PC-9 (cell line): ENCODE measurements at regions of chr14 and their contacts with region 1.

Region 1: DNA sequence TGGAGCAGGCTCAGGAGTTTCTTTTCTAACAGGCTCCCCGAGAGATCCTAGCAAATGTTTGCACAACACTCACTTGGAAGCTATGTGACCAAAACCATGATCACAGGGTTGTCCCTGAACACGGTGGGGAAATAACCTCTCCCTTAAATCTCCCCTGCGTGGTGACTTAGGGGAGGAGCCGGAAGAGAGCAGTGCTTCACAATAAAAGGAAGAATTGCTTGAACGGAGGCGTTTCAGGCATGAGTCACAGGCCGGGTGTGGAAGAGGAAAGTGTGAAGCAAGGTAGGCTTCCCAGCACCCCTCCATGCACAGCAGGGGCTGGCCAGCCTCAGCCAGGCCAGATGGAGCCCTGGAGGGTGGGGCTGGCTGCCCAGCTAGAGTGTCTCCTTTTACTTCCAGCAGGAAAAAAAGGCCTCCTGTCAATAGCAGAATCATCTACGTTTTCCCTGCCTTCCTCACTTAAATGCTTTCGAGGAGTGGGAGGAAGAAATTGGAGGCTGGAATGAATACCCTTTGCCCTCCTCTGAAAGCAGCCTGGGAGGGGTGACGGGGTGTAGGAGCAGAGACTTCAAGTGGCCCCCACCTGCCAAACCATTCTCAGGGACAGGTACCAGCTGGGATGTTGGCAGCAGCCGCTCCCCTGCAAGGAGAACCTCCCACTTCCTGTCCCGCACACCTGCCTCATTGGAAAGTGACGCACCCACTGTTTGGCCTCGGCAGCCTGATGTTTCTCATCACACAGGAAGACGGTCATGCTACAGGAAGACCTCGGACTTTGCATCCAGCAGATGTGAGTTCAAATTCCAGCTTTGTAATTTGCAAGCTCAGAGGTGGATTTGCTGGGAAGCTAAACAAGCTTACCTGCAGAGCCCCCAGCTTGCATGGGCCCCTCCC is 30.1 kb upstream of the PPP2R5C start:
- DNase-seq: peak; percentile 98 to 100
- H3K4me3 ChIP-seq: peak overlapping the region; percentile 54
- H3K27ac ChIP-seq: peak overlapping the region; percentile 92
- H3K4me1 ChIP-seq: peaks cover 50% of the 10 kb centered on the region
- H3K27me3 ChIP-seq: no peaks in the 10 kb centered on the region
- CTCF ChIP-seq: no peak

Region 2: DNA sequence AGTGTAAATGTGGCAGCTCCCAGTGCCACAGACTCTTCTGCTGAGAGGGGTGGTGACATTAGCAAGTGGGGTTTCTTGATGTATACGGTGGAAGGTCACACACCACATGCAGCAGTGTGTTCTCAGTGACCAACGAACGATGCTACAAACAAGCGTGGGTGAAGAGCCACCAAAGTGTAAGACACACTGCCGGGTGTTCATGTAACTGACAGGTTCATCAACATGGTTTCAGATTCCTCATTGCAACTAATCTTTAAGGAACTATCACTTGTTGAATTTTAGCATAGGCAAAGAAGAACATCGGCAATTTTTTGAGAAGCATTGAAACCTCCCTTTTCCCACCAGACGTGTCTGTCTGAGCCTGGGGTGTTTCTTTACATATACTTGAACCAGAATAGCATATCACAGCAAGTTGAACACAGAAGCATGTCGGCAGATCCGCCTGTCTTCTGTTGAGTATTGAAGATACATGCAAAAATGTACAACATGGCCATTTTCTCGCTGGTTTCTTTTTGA is 88.9 kb after region 1 on chr14:
- CTCF ChIA-PET with region 1: no interaction called
- POLR2A ChIA-PET with region 1: no interaction called
- intact Hi-C with region 1: no loop called
- DNase-seq: no peak
- H3K4me3 ChIP-seq: no peak overlapping the region
- H3K27ac ChIP-seq: no peak overlapping the region
- H3K4me1 ChIP-seq: no peaks in the 10 kb centered on the region
- H3K27me3 ChIP-seq: no peaks in the 10 kb centered on the region
- CTCF ChIP-seq: no peak

Region 3: GRCh38 chr14:101853455-101854018 is 122.1 kb after region 1 on chr14:
- CTCF ChIA-PET with region 1: no interaction called
- POLR2A ChIA-PET with region 1: interaction called, 17 read pairs
- intact Hi-C with region 1: no loop called
- DNase-seq: no peak
- H3K4me3 ChIP-seq: no peak overlapping the region
- H3K27ac ChIP-seq: no peak overlapping the region
- H3K4me1 ChIP-seq: no peaks in the 10 kb centered on the region
- H3K27me3 ChIP-seq: no peaks in the 10 kb centered on the region
- CTCF ChIP-seq: no peak

Region 4: GRCh38 chr14:101927859-101928258 is 196.4 kb after region 1 on chr14:
- CTCF ChIA-PET with region 1: no interaction called
- POLR2A ChIA-PET with region 1: no interaction called
- intact Hi-C with region 1: no loop called
- DNase-seq: no peak
- H3K4me3 ChIP-seq: no peak overlapping the region
- H3K27ac ChIP-seq: no peak overlapping the region
- H3K4me1 ChIP-seq: no peaks in the 10 kb centered on the region
- H3K27me3 ChIP-seq: no peaks in the 10 kb centered on the region
- CTCF ChIP-seq: no peak

Region 5: GRCh38 chr14:101992708-101993107 is 261.3 kb after region 1 on chr14:
- CTCF ChIA-PET with region 1: no interaction called
- POLR2A ChIA-PET with region 1: no interaction called
- intact Hi-C with region 1: no loop called
- DNase-seq: no peak
- H3K4me3 ChIP-seq: no peak overlapping the region
- H3K27ac ChIP-seq: no peak overlapping the region
- H3K4me1 ChIP-seq: no peaks in the 10 kb centered on the region
- H3K27me3 ChIP-seq: no peaks in the 10 kb centered on the region
- CTCF ChIP-seq: no peak